Activated CD4-positive, alpha-beta T cell treated with anti-CD3 and anti-CD28 coated beads, Interleukin-2, amount 10 ng/mL, durations not matched to agents 24 days and 14 days (primary cell): ENCODE measurements at regions of chr9 and their contacts with region 1.

Region 1: GRCh38 chr9:117782931-117783788 is 79.0 kb downstream of the TLR4 start:
- DNase-seq: peak; percentile 89
- H3K4me3 Mint-ChIP-seq: no peak overlapping the region
- H3K27ac Mint-ChIP-seq: no peak overlapping the region
- H3K4me1 Mint-ChIP-seq: peaks cover 8% of the 10 kb centered on the region
- H3K27me3 Mint-ChIP-seq: peaks cover 15% of the 10 kb centered on the region

Region 2: GRCh38 chr9:117718085-117718484 is 65.1 kb before region 1 on chr9:
- intact Hi-C with region 1: loop called (anchors 1 kb)
- DNase-seq: peak; percentile 59
- H3K4me3 Mint-ChIP-seq: no peak overlapping the region
- H3K27ac Mint-ChIP-seq: no peak overlapping the region
- H3K4me1 Mint-ChIP-seq: peaks cover 18% of the 10 kb centered on the region
- H3K27me3 Mint-ChIP-seq: peaks cover 7% of the 10 kb centered on the region

Region 3: GRCh38 chr9:117809751-117810150 is 26.6 kb after region 1 on chr9:
- intact Hi-C with region 1: no loop called
- DNase-seq: no peak
- H3K4me3 Mint-ChIP-seq: no peak overlapping the region
- H3K27ac Mint-ChIP-seq: no peak overlapping the region
- H3K4me1 Mint-ChIP-seq: no peaks in the 10 kb centered on the region
- H3K27me3 Mint-ChIP-seq: peaks cover 10% of the 10 kb centered on the region

Region 4: GRCh38 chr9:117825609-117826347 is 42.6 kb after region 1 on chr9:
- intact Hi-C with region 1: loop called (anchors 1 kb)
- DNase-seq: peak; percentile 88
- H3K4me3 Mint-ChIP-seq: peak overlapping the region; percentile 16
- H3K27ac Mint-ChIP-seq: peak overlapping the region; percentile 79
- H3K4me1 Mint-ChIP-seq: peaks cover 22% of the 10 kb centered on the region
- H3K27me3 Mint-ChIP-seq: peaks cover 48% of the 10 kb centered on the region

Region 5: GRCh38 chr9:118360036-118360435 is 576.9 kb after region 1 on chr9:
- intact Hi-C with region 1: no loop called
- DNase-seq: no peak
- H3K4me3 Mint-ChIP-seq: no peak overlapping the region
- H3K27ac Mint-ChIP-seq: no peak overlapping the region
- H3K4me1 Mint-ChIP-seq: no peaks in the 10 kb centered on the region
- H3K27me3 Mint-ChIP-seq: no peaks in the 10 kb centered on the region